Activated T-helper 1 cell treated with anti-CD3 and anti-CD28 coated beads, Interleukin-12 subunit alpha, Interleukin-12 subunit beta, Interleukin-2, Interleukin-4 antibody, amounts not matched to agents 30 ng/mL and 10 ng/mL and 1 ng/mL, durations not matched to agents 14 hours and 24 hours and 36 hours (primary cell): ENCODE measurements at regions of chr7 and their contacts with region 1.

Region 1: GRCh38 chr7:48299580-48300169 is 128.4 kb downstream of the ABCA13 start:
- DNase-seq: peak; percentile 20
- H3K4me3 Mint-ChIP-seq: no peak overlapping the region
- H3K27ac Mint-ChIP-seq: no peak overlapping the region
- H3K4me1 Mint-ChIP-seq: peaks cover 6% of the 10 kb centered on the region
- H3K27me3 Mint-ChIP-seq: peaks cover 5% of the 10 kb centered on the region

Region 2: DNA sequence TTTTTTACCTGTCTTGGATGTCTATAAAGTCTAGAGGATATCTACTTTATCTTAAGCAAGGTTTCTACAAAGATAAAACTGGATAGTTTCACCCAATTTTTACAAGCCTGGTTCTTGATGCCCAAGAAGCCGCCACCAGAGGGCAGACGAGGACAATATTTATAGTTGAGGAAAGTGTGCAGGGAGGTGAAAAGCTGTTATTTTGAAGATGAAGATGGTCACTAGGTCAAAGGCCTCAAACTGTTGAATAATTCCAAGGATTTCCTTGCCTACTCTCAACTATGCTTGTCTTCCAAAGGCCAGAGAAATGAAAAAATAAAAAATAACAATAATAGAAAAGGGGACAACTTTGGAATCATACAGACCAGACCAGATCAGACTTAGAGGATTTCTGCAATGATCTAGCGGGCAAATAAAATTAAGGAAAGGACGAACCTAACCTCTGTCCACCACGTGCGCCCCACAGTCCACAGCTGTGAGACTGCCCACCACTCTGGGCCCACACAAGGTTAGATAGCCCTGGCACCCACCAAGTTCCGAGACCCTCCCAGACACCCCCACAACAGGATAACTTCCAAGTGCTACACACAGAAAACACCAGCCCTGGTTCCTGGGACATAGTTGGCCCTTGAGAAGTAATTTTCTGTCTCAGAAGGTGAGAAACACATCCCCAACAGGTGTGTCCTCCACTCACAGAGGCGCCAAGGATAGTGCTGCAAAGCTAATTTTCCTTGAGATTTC is 354.2 kb before region 1 on chr7:
- intact Hi-C with region 1: loop called (anchors 5 kb)
- DNase-seq: peak; percentile 44
- H3K4me3 Mint-ChIP-seq: no peak overlapping the region
- H3K27ac Mint-ChIP-seq: no peak overlapping the region
- H3K4me1 Mint-ChIP-seq: no peaks in the 10 kb centered on the region
- H3K27me3 Mint-ChIP-seq: no peaks in the 10 kb centered on the region

Region 3: DNA sequence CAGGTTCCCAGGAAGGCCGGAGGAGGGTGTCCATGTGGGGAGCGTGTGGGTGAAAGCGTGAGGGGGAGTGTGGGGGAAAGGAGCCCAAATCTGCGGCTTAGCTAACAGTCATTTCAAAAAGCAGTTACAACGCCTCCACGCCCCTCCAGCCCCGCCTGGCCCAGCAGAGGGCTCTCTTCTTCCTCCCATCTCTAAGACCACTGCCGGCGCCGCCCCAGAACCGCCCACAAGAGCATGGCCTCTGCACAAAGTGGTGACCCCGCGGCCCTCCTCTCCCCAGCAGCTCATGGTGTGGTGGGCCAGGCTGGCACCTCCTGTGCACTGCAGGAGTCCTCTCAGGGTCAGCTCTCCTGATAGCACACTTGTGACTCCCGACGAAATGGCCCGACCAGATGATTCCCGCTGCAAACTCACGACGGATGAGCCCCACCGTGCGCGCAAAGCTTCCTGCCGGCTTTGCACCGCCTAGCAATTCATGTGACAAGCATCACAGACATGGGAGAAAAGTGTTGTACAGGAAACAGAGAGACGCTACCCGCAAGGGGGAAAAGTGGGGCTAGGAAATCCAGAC is 307.8 kb before region 1 on chr7:
- intact Hi-C with region 1: loop called (anchors 2 kb)
- DNase-seq: peak; percentile 80
- H3K4me3 Mint-ChIP-seq: peak overlapping the region; percentile 80
- H3K27ac Mint-ChIP-seq: peak overlapping the region; percentile 80
- H3K4me1 Mint-ChIP-seq: peaks cover 17% of the 10 kb centered on the region
- H3K27me3 Mint-ChIP-seq: peaks cover 6% of the 10 kb centered on the region

Region 4: GRCh38 chr7:48139459-48139858 is 160.2 kb before region 1 on chr7:
- intact Hi-C with region 1: loop called (anchors 10 kb)
- DNase-seq: no peak
- H3K4me3 Mint-ChIP-seq: no peak overlapping the region
- H3K27ac Mint-ChIP-seq: no peak overlapping the region
- H3K4me1 Mint-ChIP-seq: peaks cover 10% of the 10 kb centered on the region
- H3K27me3 Mint-ChIP-seq: peaks cover 11% of the 10 kb centered on the region

Region 5: DNA sequence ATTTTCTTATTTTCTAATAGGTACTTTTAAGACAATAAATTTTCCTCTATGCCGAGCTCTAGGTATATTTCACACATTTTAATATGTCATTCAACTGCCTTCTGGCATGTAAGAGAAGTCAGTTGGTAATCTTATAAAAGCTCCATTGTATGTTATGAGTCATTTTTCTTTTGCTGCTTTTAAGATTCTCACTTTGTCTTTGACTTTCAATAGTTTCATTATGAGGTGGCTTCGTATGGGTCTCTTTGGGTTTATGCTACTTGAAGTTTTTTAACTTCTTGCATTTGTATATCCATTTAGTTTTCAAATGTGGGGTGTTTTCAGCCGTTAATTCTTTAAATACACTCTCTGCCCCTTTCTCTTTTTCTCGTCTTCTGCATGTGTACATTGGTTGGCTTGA is 47.9 kb before region 1 on chr7:
- intact Hi-C with region 1: loop called (anchors 1 kb)
- DNase-seq: no peak
- H3K4me3 Mint-ChIP-seq: no peak overlapping the region
- H3K27ac Mint-ChIP-seq: peak overlapping the region; percentile 26
- H3K4me1 Mint-ChIP-seq: peaks cover 9% of the 10 kb centered on the region
- H3K27me3 Mint-ChIP-seq: peaks cover 9% of the 10 kb centered on the region

Region 6: DNA sequence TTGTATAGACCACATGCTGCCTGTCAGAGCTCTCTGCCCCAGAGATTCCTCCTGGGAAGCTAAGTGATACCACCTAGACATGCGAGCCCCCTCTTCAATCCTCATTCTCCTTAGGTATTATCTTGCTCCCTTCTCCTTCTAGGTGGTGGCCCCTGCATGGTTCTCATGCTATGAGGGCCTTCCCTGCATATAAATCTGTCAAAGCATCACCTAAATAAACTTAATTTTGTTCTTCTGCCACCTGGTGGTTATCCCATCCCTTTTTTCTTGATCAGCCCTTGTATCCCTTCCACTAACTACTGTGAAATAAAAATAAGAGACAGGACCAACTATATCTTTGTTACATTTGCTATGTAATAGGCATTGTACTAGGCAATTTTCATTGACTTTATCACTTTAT is 866.8 kb after region 1 on chr7:
- intact Hi-C with region 1: loop called (anchors 2 kb)
- DNase-seq: no peak
- H3K4me3 Mint-ChIP-seq: no peak overlapping the region
- H3K27ac Mint-ChIP-seq: no peak overlapping the region
- H3K4me1 Mint-ChIP-seq: no peaks in the 10 kb centered on the region
- H3K27me3 Mint-ChIP-seq: no peaks in the 10 kb centered on the region